GM18951 (cell line): ENCODE measurements at regions of chr18 and their contacts with region 1.

Region 1: DNA sequence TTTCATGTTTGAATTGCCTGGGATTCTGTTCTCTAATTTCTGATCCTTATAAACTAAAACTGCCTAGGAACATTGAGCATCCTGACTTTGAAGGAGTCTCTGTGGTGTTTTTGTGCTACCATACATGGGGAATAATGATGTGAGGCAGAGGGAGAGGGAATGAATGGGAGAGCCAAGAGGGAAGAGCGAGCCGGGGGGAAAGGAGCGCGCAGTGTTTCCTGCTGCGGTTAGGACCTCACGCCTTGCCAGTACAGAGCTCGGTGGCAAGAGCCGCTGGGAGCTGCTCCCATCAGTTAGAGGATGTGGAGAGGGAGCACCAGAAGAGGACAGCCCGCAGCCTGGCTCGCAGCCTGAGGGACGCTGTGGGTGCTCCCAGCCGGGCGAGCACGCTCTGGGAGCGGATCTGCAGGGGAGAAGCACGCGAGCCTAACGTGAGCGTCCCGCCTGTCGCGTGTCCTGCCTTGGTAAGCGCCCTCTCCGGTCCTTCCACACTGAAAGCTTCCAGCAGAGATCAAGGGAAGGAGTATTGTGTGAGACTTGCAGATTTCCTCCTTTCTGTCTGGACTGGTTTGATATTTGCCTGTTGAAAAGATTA is 114.7 kb downstream of the FAM210A start:
- POLR2A ChIP-seq: no peak

Region 2: DNA sequence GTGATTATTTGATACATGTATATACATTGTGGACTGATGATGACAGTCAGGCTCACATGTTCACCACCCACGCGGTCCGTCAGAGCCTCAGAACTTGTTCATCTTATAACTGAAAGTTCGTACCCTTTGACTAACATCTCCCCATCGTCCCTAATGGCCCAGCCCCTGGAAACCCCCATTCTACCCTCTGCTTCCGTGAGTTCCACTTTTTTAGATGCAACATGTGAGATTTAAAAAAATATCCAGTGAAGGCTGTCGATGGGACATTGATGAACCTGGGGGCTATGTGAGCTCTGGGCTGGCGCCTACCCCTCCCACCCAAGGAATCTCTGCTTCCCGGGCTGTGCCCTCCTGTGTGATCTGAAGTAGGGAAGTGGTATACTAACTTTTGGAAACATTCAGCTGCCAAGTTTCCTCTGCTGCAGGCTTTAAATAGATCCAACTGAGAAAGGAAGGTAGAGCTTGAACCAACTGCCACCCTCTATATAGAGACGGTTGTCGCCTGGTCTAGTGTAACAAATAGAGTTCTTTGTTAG is 49.1 kb before region 1 on chr18:
- in situ Hi-C with region 1: loop called (anchors 5 kb)
- POLR2A ChIP-seq: no peak